ENCODE measurements at regions of chr13 and their contacts with region 1.

Region 1: DNA sequence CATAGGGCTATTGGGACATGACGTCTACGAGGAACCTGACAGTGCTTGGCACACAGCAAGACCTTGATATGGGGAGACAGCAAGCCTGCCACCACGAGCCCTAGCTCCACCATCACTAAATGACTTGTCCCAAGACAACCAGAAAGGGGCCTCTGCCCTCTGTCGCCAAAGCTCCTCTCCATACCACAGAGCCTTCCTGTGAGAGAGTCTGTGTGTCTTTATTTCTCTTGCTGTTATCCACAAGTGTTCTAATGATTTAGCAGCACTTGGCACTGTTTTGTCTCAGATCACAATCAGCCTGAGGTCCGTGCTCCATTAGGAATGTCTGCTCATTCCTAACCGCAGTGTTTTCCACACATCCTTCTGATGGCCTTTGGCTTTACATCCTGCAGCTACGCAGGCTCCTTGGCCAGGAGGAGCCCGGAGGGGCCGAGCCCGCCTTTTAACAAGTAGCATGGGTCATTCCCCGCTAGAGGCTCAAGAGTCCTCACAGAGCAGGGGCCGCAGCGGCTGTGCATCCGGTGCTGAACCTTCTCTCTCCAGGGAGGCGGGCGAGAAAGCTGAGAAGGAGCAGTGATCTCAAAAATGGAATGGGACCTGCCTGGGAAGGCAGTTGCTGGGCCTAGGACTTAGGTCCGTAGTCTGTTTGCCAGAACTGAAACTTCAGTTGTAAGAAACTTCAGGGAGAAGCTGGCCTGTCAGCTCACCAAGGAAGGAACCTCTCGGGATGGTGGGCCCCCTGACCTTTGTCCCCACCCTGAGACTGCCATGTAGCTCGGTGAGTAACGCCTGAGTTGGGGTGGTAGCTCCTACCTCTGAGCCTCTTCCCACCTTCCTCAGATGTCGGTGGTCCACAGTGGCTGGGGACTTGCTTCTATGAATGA is 61.1 kb upstream of the HMGB1 start:
- DNase-seq: no peak
- ATAC-seq: no peak
- H3K4me3 ChIP-seq: no peak overlapping the region
- H3K4me3 Mint-ChIP-seq: no peak overlapping the region
- H3K27ac ChIP-seq: no peak overlapping the region
- H3K27ac Mint-ChIP-seq: no peak overlapping the region
- H3K4me1 ChIP-seq: no peaks in the 10 kb centered on the region
- H3K4me1 Mint-ChIP-seq: peaks cover 10 to 14% (median 12%) of the 10 kb centered on the region in 3 donors
- H3K27me3 ChIP-seq: no peaks in the 10 kb centered on the region
- H3K27me3 Mint-ChIP-seq: peaks cover 0 to 3% of the 10 kb centered on the region in 2 donors

Region 2: GRCh38 chr13:30581582-30581981 is 54.7 kb after region 1 on chr13:
- CTCF ChIA-PET with region 1: interaction called in 1 of 2 experiments, 13 read pairs
- POLR2A ChIA-PET with region 1: no interaction called
- DNase-seq: peak in 3 of 35 experiments; percentile 2 to 41 (median 6)
- ATAC-seq: no peak
- H3K4me3 ChIP-seq: no peak overlapping the region
- H3K4me3 Mint-ChIP-seq: no peak overlapping the region
- H3K27ac ChIP-seq: no peak overlapping the region
- H3K27ac Mint-ChIP-seq: no peak overlapping the region
- H3K4me1 ChIP-seq: peaks cover 0 to 12% of the 10 kb centered on the region in 2 experiments
- H3K4me1 Mint-ChIP-seq: peaks cover 12 to 21% (median 20%) of the 10 kb centered on the region in 3 donors
- H3K27me3 ChIP-seq: no peaks in the 10 kb centered on the region
- H3K27me3 Mint-ChIP-seq: no peaks in the 10 kb centered on the region

Region 3: GRCh38 chr13:30600496-30600895 is 73.6 kb after region 1 on chr13:
- CTCF ChIA-PET with region 1: no interaction called
- POLR2A ChIA-PET with region 1: no interaction called
- DNase-seq: no peak
- ATAC-seq: no peak
- H3K4me3 ChIP-seq: no peak overlapping the region
- H3K4me3 Mint-ChIP-seq: no peak overlapping the region
- H3K27ac ChIP-seq: no peak overlapping the region
- H3K27ac Mint-ChIP-seq: no peak overlapping the region
- H3K4me1 ChIP-seq: no peaks in the 10 kb centered on the region
- H3K4me1 Mint-ChIP-seq: peaks cover 0 to 17% (median 0%) of the 10 kb centered on the region in 3 donors
- H3K27me3 ChIP-seq: no peaks in the 10 kb centered on the region
- H3K27me3 Mint-ChIP-seq: no peaks in the 10 kb centered on the region

Region 4: DNA sequence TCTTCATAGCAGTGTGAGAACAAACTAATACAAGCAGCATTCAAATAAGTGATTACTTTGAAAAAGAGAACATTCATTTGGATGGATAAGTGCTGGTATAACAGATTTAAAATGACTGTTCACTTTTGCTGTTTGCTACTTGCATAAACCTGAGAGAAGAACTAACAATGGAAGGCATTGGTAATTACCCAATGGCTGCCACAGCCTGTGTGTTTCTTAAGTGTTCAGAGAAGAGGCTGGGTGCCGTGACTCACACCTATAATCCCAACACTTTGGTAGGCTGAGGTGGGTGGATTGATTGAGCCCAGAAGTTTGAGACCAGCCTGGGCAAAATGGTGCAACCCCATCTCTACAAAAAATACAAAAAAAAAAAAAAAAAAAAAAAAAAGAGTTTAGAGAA is 400.7 kb after region 1 on chr13:
- CTCF ChIA-PET with region 1: no interaction called
- POLR2A ChIA-PET with region 1: no interaction called
- DNase-seq: no peak
- ATAC-seq: no peak
- H3K4me3 ChIP-seq: no peak overlapping the region
- H3K4me3 Mint-ChIP-seq: no peak overlapping the region
- H3K27ac ChIP-seq: no peak overlapping the region
- H3K27ac Mint-ChIP-seq: no peak overlapping the region
- H3K4me1 ChIP-seq: peaks cover 0 to 7% of the 10 kb centered on the region in 2 experiments
- H3K4me1 Mint-ChIP-seq: peaks cover 5 to 13% (median 7%) of the 10 kb centered on the region in 3 donors
- H3K27me3 ChIP-seq: peaks cover 6 to 28% of the 10 kb centered on the region in 2 experiments
- H3K27me3 Mint-ChIP-seq: peaks cover 41 to 44% of the 10 kb centered on the region in 2 donors

Measured in T-cell (primary cell).